ENCODE measurements at regions of chr12 and their contacts with region 1.

Region 1: DNA sequence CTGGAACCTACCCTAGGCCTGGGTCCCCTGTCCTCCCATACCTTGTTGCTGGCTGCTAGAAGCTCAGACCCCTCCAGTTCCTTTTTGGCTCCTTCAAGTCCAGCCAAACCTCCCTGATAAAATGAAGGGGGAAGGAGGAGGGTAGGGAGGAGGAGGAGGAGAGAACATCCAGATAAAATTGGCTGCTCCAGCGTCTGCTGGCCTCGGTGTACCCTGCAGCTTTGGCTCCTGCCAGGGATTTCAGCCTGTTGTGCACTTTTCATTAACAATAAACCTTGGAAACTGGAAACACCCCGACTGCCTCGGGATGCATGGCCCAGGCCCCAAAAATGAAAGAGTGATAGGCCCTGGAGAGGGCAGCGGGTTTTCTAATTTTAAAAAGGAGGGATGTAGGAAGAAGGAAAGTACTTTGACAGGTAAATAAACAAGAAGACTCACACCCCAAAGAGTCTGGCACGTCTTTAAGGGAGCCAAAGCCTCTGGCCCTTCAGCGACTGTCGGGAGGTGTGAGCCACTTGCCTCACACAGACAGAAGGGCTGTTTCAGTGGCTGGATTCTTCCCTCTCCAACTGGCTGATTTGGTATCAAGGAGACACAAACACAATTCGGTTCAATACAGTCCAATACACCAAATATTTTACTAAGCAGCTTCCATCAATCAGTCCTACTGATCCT is 49.8 kb downstream of the NUAK1 start:
- DNase-seq: no peak
- H3K4me3 ChIP-seq: no peak overlapping the region
- H3K27ac ChIP-seq: peak overlapping the region; percentile 52 to 80
- H3K4me1 ChIP-seq: peaks cover 4 to 6% of the 10 kb centered on the region in 2 donors
- H3K27me3 ChIP-seq: no peaks in the 10 kb centered on the region
- CTCF ChIP-seq: no peak
- POLR2A ChIP-seq: no peak

Region 2: GRCh38 chr12:106136263-106136662 is 47.3 kb after region 1 on chr12:
- intact Hi-C with region 1: no loop called
- DNase-seq: peak; percentile 80 to 87
- H3K4me3 ChIP-seq: peak overlapping the region; percentile 81 to 96 (median 89)
- H3K27ac ChIP-seq: peak overlapping the region; percentile 83 to 88
- H3K4me1 ChIP-seq: no peaks in the 10 kb centered on the region
- H3K27me3 ChIP-seq: no peaks in the 10 kb centered on the region
- CTCF ChIP-seq: peak; percentile 70 to 87 (median 77)
- POLR2A ChIP-seq: no peak

Region 3: GRCh38 chr12:106342397-106343213 is 253.7 kb after region 1 on chr12:
- intact Hi-C with region 1: loop called (anchors 5 kb)
- DNase-seq: peak in 1 of 2 donors; percentile 57
- H3K4me3 ChIP-seq: peak overlapping the region in 1 of 3 donors; percentile 39
- H3K27ac ChIP-seq: peak overlapping the region; percentile 46 to 76
- H3K4me1 ChIP-seq: peaks cover 5 to 13% of the 10 kb centered on the region in 2 donors
- H3K27me3 ChIP-seq: no peaks in the 10 kb centered on the region
- CTCF ChIP-seq: no peak
- POLR2A ChIP-seq: no peak